Colonic mucosa (tissue), 4 donors: ENCODE measurements at regions of chr14 and their contacts with region 1.

Region 1: DNA sequence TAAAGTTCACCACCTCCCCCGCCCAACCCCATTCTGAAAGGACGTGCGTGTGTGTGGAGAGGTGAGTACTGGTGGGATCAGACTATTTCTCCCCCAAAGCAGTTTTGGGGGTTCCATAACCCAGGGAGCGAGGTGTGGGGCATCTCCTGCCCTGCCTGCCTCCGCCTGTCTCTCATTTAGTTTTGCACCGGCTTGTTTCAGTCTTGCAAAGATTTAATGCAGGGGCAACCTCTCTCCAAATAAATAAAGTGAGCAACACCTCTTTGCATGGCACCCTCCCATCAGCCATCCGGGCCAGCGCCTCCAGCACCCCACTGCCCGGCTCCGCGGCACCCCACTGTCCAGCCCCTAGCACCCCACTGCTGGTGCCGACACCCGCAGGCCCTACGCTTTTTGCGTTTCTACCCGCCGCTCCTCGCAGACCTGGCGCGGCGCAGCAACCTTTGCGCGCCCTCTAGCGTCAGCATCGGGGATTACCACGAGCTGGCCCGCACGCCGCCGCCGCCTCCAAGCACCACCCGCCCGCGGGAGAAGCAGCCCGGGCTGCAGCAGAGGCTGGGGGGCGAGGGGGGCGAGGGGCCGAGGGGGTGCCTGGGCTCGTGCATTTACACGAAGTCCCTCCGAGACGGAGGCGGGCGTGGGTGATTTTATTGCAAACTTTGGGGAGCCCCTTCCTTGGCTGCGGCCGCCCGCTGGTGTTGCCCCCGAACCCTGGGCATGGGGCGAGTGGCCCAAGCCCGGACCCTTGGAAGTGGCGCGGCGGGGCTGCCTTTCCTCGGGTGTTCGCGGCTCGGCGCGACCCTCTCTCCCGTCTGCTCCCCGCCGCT is 55.8 kb upstream of the VRK1 start:
- DNase-seq: peak; percentile 41
- H3K4me3 ChIP-seq: no peak overlapping the region
- H3K27ac ChIP-seq: no peak overlapping the region
- H3K4me1 ChIP-seq: no peaks in the 10 kb centered on the region
- H3K27me3 ChIP-seq: peaks cover 29% of the 10 kb centered on the region
- CTCF ChIP-seq: peak; percentile 89

Region 2: GRCh38 chr14:96567289-96567899 is 174.0 kb before region 1 on chr14:
- intact Hi-C with region 1: loop called (anchors 5 kb)
- DNase-seq: no peak
- H3K4me3 ChIP-seq: no peak overlapping the region
- H3K27ac ChIP-seq: no peak overlapping the region
- H3K4me1 ChIP-seq: no peaks in the 10 kb centered on the region
- H3K27me3 ChIP-seq: no peaks in the 10 kb centered on the region
- CTCF ChIP-seq: peak; percentile 23

Region 3: DNA sequence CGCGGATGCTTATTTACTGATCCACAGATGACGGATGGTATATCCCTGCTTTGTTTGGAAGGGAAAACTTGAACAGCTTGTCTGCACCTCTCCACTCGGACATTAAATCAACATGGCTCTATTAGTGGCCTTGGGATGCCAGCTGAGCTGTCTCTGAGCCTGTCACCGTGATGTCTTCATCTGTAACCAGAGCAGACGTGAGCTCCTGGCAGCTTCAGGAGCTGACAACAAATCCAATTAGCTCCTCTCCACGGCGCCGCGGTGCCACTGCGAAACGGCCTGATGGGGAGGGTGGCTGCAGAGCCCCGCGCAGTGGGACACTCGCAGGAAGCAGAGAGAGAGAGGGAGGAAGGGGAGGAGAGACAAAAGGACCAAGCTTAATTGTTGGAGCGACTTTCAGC is 126.9 kb before region 1 on chr14:
- intact Hi-C with region 1: no loop called
- DNase-seq: no peak
- H3K4me3 ChIP-seq: no peak overlapping the region
- H3K27ac ChIP-seq: no peak overlapping the region
- H3K4me1 ChIP-seq: no peaks in the 10 kb centered on the region
- H3K27me3 ChIP-seq: no peaks in the 10 kb centered on the region
- CTCF ChIP-seq: no peak